Tibial artery (tissue), 4 donors: ENCODE measurements at regions of chr3 and their contacts with region 1.

Region 1: DNA sequence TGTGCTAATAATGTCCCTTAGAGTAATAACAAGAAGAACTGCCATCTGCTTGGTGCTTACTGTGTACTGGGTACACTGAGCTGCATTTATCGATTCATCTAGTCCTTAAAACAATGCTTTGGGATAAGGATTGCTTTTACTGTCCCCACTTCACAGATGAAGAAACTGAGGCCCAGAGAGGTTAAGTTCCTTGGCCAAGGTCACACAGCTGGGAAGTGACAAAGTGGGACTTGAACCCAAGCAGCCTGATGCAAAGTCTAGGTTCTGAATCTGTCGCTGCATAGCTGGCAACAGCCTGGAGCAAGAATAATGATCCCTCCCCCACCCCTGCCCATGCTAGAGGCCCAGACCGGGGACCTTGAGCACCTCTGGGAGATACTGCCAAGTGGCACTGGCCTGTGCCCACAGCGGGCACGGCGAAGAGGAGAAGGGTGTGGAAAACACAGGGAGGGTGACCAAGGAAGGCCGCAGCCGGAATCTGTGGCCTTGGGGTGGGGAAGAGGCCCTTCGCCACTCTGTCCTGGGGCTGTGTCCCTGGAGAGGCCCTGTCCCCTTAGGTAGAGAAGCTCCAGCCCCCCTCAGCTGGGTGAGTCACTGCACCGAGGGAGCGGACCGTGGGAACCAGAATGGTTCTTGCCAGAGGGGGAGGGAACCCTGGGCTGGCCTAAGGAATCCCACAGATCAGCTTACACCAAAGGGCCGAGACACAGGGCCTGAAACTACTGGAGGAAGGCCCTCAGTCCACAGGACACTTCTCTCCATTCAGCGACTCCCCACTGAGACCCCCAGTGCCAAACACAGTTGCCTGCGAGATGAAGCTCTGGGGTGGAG is 3.5 kb downstream of the PLXND1 start:
- DNase-seq: peak; percentile 89 to 96
- H3K4me3 ChIP-seq: peak overlapping the region; percentile 58 to 84
- H3K27ac ChIP-seq: peak overlapping the region; percentile 88 to 90
- H3K4me1 ChIP-seq: peaks cover 11 to 84% (median 76%) of the 10 kb centered on the region in 4 donors
- H3K27me3 ChIP-seq: no peaks in the 10 kb centered on the region
- CTCF ChIP-seq: no peak

Region 2: DNA sequence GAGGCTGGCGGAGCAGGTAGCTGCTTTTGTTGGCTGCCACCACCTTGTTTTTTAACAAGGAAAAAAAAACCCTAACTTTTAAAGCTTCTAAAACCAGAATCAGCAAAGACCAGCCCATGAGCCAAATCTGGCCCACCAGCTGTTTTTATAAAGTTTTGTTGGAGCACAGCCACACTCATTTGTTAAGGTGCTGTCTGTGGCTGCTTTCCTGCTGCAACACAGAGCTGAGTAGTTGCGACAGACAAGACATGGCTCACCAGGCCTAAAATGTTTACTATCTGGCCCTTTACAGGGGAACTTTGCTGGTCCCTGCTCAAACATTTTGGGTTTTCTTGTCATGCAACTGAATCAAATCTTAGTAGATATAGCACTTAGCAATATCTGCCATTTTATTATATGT is 193.4 kb before region 1 on chr3:
- intact Hi-C with region 1: no loop called
- DNase-seq: no peak
- H3K4me3 ChIP-seq: no peak overlapping the region
- H3K27ac ChIP-seq: no peak overlapping the region
- H3K4me1 ChIP-seq: no peaks in the 10 kb centered on the region
- H3K27me3 ChIP-seq: peaks cover 0 to 4% of the 10 kb centered on the region in 2 donors
- CTCF ChIP-seq: no peak

Region 3: GRCh38 chr3:129558772-129559564 is 44.0 kb before region 1 on chr3:
- intact Hi-C with region 1: loop called (anchors 5 kb)
- DNase-seq: no peak
- H3K4me3 ChIP-seq: no peak overlapping the region
- H3K27ac ChIP-seq: peak overlapping the region; percentile 86 to 90
- H3K4me1 ChIP-seq: peaks cover 12 to 98% (median 82%) of the 10 kb centered on the region in 4 donors
- H3K27me3 ChIP-seq: no peaks in the 10 kb centered on the region
- CTCF ChIP-seq: no peak